Caco-2 (cell line): ENCODE measurements at regions of chr7 and their contacts with region 1.

Region 1: DNA sequence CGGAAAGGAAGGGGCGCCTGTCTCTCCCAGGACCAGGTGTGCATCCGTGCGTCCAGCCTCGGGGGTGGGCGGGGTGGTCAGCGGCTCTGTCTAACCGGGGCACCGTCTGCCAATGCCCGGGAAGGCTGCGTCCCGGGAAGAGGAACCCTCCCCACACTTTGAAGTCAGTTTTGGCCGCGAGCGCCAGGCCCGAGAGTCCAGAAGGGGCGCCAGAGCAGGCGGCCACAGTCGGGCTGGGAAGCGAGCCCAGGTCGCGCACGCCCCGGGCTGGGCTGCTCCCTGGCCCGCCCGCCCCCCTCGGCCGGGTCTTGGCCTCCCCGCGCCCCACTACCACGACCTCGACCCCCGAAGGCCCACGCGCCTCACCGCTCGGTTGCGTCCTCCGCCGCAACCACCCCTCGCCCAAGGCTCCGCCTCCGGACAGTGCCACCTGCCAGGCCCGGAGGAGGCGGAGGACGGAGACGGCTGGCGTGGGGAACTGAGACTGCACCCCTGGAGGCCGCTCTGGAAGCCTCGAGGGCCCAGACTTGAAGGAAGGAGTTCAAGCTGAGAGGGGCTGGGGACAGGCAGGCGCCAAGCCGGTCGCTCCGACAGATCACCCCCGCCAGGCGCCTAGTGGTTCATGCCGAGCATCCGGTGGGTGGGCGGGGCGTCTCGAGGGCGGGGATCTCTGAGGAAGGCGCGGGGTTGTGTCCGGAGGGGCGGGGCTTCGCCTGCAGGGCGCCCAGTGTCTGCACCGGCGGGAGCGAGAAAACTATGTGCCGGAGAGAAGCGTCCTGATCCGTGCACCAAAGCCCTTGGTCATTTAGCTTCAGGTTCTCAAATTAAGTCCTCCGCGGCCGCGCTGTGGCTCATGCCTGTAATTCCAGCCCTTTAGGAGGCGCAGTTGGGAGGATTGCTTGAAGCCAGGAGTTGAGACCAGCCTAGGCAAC is at the start of gene BRAT1:
- DNase-seq: peak; percentile 97 to 98
- H3K4me3 ChIP-seq: peak within 1 kb of the TSS; percentile 93
- H3K4me3 Mint-ChIP-seq: peak within 1 kb of the TSS; percentile 84
- H3K27ac Mint-ChIP-seq: peak within 1 kb of the TSS; percentile 89
- H3K4me1 ChIP-seq: peaks cover 7% of the 10 kb centered on the region
- H3K4me1 Mint-ChIP-seq: peaks cover 5% of the 10 kb centered on the region
- H3K27me3 ChIP-seq: no peaks in the 10 kb centered on the region
- H3K27me3 Mint-ChIP-seq: no peaks in the 10 kb centered on the region
- CTCF ChIP-seq: peak; percentile 45 to 69
- total RNA-seq, gene BRAT1: 33.2 and 33.5 TPM in 2 replicates

Region 2: DNA sequence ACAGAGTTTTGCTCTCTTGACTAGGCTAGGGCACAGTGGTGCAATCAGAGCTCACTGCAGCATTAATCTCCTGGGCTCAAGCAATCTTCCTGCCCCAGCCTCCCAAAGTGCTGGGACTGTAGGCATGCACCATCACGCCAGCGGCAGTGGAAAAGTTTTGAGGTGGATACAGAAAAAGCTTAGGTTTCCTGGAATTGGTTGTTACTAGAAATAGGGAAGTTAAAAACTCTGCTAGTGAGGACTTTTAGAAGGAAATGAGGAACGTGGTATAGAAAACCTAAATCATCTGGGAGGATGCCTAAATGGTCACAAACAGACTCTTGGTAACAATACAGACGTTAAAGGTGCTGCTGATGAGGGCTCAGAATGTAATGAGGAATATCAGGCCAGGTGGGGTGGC is 230.2 kb before region 1 on chr7:
- CTCF ChIA-PET with region 1: no interaction called
- POLR2A ChIA-PET with region 1: no interaction called
- intact Hi-C with region 1: no loop called
- DNase-seq: no peak
- H3K4me3 ChIP-seq: no peak overlapping the region
- H3K4me3 Mint-ChIP-seq: no peak overlapping the region
- H3K27ac Mint-ChIP-seq: no peak overlapping the region
- H3K4me1 ChIP-seq: no peaks in the 10 kb centered on the region
- H3K4me1 Mint-ChIP-seq: no peaks in the 10 kb centered on the region
- H3K27me3 ChIP-seq: no peaks in the 10 kb centered on the region
- H3K27me3 Mint-ChIP-seq: no peaks in the 10 kb centered on the region
- CTCF ChIP-seq: no peak

Region 3: DNA sequence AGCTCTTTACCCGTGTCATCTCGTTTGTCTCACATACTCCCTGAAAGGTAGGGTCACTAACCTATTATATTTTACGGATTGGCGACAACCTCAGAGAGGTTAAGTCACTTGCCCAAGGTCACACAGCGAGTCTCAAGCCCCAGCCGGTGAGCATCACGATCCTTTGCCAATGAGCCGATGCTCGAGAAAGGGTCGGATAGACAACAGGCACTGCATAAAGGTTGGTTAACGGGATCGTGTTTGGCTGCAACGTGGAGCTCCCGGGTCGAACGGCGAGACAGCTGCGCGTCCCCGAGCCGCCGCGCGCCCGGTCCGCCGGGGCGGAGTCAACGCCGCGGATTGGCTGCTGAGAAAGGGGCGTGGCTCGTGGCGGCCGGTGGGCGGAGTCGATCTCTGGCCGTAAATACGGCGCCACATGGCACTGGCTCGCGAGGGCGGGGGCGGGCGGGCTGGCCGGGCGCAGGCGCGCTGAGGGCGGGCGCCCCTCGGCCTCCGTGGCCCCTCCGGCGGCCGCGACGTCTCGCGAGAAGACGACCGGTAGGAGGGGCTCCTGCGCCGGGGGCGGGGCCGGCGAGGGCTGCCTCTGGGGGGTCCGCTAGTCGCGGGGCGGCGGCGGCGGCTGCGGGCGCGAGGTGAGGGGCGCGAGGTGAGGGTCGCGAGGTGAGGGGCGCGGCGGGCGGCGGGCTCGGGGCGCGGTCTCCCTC is 152.2 kb before region 1 on chr7 and contains the start of gene CHST12:
- CTCF ChIA-PET with region 1: no interaction called
- POLR2A ChIA-PET with region 1: no interaction called
- intact Hi-C with region 1: loop called (anchors 10 kb)
- DNase-seq: peak; percentile 95 to 97
- H3K4me3 ChIP-seq: peak within 1 kb of the TSS; percentile 79
- H3K4me3 Mint-ChIP-seq: peak within 1 kb of the TSS; percentile 76
- H3K27ac Mint-ChIP-seq: no peak within 1 kb of the TSS
- H3K4me1 ChIP-seq: peaks cover 6% of the 10 kb centered on the region; the same call in 1 of the 2 replicates
- H3K4me1 Mint-ChIP-seq: peaks cover 18% of the 10 kb centered on the region
- H3K27me3 ChIP-seq: no peaks in the 10 kb centered on the region
- H3K27me3 Mint-ChIP-seq: no peaks in the 10 kb centered on the region
- CTCF ChIP-seq: no peak
- total RNA-seq, gene CHST12: 26.0 and 28.0 TPM in 2 replicates

Region 4: DNA sequence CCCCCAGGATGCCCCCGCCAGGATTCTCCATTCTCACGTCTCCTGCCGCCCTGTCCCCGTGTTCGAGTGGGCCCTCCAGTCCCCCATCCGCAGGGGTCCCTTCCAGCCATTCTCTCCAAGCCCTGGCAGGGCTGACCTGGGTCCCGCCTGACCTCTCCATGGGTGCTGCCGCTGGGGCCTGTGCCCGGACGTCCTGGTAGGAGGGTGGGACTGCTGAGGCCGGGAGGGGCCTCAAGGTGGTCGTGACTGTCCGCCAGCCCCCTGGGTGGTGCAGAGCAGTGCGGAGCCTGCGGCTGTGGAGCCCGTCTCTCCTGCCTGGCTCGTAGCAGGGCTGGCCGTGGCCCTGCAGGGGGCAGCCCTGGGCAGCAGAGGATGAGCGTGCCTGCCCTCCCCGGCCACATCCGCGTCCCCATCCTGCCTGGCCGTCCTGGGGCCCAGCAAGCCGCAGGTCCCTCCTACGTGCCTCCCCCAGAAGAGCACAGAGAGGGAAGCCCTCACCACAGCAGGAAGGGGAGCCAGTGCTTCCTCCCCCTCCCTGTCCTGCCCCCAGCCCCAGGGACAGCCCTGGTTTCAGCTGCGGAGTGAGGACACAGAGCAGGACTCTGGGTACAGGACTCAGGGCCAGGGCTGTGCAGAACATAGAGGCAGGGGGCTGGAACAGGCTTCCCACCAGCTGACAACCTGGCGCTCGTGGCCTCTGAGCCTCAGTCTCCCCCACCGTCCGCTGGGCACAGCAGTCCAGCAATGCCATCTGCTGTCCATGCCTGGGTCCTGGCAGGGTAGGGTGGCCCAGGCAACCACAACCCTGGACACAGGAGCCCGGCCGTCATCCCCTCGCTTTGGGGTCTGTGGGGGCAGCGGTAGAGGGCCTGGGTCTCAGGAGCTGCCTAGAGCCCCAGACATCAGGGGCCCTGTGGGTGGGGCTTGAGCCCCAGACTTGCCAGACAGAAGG is 77.7 kb before region 1 on chr7:
- CTCF ChIA-PET with region 1: interaction called, 3 read pairs
- POLR2A ChIA-PET with region 1: no interaction called
- intact Hi-C with region 1: loop called (anchors 5 kb)
- DNase-seq: peak; percentile 51 to 75
- H3K4me3 ChIP-seq: no peak overlapping the region
- H3K4me3 Mint-ChIP-seq: no peak overlapping the region
- H3K27ac Mint-ChIP-seq: no peak overlapping the region
- H3K4me1 ChIP-seq: no peaks in the 10 kb centered on the region
- H3K4me1 Mint-ChIP-seq: no peaks in the 10 kb centered on the region
- H3K27me3 ChIP-seq: no peaks in the 10 kb centered on the region
- H3K27me3 Mint-ChIP-seq: no peaks in the 10 kb centered on the region
- CTCF ChIP-seq: peak; percentile 66 to 81

Region 5: DNA sequence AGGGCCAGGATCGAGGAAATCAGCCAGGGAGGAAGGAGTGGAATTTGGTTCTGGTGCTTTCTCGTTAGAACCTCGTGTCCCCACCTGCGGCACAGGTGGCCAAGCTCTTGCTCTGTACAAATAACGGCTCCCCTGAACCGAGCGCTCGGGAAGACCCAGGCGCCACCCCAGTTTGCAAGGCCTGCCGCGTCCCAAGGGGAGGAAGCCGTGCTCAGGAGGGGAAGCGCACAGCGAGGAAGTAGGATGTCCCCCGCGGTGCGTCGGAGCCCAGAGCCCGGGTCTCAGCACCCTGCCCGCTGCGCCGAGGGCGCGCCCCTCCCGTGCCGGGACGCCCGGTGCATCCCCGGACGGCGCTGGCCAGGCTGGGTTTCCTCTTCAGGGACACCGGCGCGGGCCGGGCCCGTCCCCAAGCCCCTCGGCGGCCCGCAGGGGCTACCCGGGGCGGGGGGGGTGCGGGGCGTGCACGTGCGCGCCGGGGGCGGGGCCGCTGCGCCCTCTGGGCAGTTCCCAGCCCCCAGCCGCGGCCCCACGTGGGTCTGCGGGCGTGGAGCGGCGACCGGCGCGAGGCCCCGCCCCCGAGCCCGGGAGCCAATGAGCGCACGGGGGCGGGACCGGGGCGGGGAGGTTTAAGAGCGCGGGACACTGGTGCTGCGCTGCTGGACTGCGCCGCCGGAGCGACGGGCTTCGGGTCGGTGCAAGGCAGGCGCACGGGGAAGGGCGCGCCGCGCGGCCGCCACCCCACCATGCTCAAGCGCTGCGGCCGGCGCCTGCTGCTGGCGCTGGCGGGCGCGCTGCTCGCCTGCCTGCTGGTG is 36.1 kb before region 1 on chr7 and contains the start of gene LFNG:
- CTCF ChIA-PET with region 1: interaction called, 6 read pairs
- POLR2A ChIA-PET with region 1: no interaction called
- intact Hi-C with region 1: loop called (anchors 2 kb)
- DNase-seq: peak; percentile 84 to 92
- H3K4me3 ChIP-seq: peak within 1 kb of the TSS; percentile 56
- H3K4me3 Mint-ChIP-seq: peak within 1 kb of the TSS; percentile 81
- H3K27ac Mint-ChIP-seq: no peak within 1 kb of the TSS
- H3K4me1 ChIP-seq: peaks cover 41% of the 10 kb centered on the region
- H3K4me1 Mint-ChIP-seq: peaks cover 13% of the 10 kb centered on the region
- H3K27me3 ChIP-seq: no peaks in the 10 kb centered on the region
- H3K27me3 Mint-ChIP-seq: no peaks in the 10 kb centered on the region
- CTCF ChIP-seq: no peak
- total RNA-seq, gene LFNG: 4.5 and 5.1 TPM in 2 replicates

Region 6: DNA sequence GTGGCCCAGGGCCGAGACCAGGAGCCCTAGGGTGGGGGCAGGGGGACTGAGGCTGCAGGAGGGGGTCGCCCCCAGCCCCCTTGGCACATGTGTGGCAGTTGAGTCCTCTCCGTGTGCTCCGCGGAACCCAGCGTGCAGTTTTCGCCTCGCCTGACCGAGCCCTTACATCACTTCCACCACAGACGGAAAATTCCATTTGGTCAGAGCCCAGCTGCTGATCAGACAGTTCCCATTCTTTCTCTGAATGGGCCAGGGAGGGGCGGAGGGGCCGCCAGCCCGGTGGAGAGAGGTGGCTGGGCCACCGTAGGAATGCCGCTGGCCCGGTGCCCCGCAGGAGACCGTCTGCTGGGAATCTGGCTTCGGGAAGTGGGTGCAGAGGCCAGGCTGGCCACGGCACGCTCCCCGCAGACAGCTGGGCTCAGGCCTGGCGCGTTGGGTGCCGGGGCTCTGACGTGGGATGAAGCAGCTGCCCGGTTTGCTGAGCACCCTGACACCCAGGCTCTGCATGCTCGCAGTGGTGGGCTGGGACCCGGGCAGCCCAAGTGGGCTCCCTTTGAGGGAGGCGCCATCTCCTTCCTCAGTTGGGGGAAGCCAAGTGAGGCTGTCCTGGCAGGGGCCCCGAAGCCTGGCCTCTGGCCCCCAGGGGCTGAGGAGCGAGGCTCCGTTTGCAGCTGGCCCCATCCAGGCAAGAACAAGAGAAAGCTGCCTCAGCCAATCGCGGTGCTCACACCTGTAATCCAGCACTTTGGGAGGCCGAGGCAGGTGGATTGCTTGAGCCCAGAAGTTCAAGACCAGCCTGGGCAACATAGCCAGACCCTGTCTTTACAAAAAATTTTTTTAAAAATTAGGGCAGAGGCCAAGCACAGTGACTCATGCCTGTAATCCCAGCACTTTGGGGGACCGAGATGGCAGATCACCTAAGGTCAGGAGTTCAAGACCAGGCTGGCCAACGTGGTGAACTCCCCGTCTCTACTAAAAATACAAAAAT is 86.3 kb after region 1 on chr7:
- CTCF ChIA-PET with region 1: no interaction called
- POLR2A ChIA-PET with region 1: no interaction called
- intact Hi-C with region 1: no loop called
- DNase-seq: peak in 1 of 2 experiments; percentile 42
- H3K4me3 ChIP-seq: no peak overlapping the region
- H3K4me3 Mint-ChIP-seq: no peak overlapping the region
- H3K27ac Mint-ChIP-seq: no peak overlapping the region
- H3K4me1 ChIP-seq: 0 out of 2 replicates have a peak, but pooled peaks cover 3% of the 10 kb centered on the region
- H3K4me1 Mint-ChIP-seq: no peaks in the 10 kb centered on the region
- H3K27me3 ChIP-seq: no peaks in the 10 kb centered on the region
- H3K27me3 Mint-ChIP-seq: no peaks in the 10 kb centered on the region
- CTCF ChIP-seq: no peak

Region 7: DNA sequence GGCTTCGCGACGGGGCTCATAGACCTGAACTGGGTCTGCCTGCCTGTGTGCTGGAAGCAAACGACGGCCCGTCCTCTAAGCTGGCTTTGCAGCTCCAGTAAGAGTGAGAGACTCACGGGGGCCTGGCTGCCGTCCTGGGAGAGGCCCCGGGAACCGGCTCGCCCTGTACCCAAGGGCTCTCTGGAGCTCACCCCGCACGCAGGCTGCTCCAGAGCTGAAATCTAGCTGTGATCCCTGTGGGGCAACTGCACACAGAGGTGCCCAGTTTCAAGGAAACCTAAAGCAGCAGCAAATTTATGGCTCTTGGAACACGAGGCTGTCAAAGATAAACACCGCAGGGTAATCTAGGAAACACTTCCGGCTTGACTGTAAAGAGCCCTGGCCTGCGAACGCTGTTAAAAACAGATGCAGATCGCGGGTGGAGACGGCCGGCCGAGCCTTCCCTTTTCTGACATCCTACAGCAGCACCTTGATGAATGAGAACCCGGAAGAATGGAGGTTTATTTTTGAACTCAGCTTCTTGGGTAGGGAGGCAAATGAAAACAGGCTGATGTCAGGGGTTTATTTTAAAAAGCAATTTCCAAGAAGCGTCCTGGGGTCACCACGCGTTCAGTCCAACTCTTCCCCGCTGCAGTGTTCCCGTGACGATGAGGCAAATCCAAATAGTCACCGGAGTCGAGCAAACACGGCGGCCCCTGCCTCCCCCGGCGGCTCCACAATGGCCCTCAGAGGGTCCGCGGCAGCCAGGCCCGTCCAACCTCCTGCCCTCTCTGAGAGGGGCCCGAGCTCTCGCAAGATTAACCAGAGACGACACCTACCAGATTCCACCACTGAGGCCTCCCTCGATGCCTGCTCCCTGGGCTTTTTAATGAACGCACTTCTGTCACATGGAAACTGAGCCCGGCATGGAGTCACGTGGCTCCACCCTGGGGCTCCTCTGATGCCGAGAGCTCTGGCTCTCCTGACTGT is 162.2 kb after region 1 on chr7:
- CTCF ChIA-PET with region 1: no interaction called
- POLR2A ChIA-PET with region 1: no interaction called
- intact Hi-C with region 1: no loop called
- DNase-seq: peak in 1 of 2 experiments; percentile 30
- H3K4me3 ChIP-seq: no peak overlapping the region
- H3K4me3 Mint-ChIP-seq: no peak overlapping the region
- H3K27ac Mint-ChIP-seq: no peak overlapping the region
- H3K4me1 ChIP-seq: no peaks in the 10 kb centered on the region
- H3K4me1 Mint-ChIP-seq: peaks cover 8% of the 10 kb centered on the region
- H3K27me3 ChIP-seq: no peaks in the 10 kb centered on the region
- H3K27me3 Mint-ChIP-seq: no peaks in the 10 kb centered on the region
- CTCF ChIP-seq: no peak

Region 8: GRCh38 chr7:3312583-3312982 is 757.2 kb after region 1 on chr7:
- CTCF ChIA-PET with region 1: no interaction called
- POLR2A ChIA-PET with region 1: no interaction called
- intact Hi-C with region 1: no loop called
- DNase-seq: no peak
- H3K4me3 ChIP-seq: no peak overlapping the region
- H3K4me3 Mint-ChIP-seq: no peak overlapping the region
- H3K27ac Mint-ChIP-seq: no peak overlapping the region
- H3K4me1 ChIP-seq: no peaks in the 10 kb centered on the region
- H3K4me1 Mint-ChIP-seq: no peaks in the 10 kb centered on the region
- H3K27me3 ChIP-seq: no peaks in the 10 kb centered on the region; the same call in 1 of the 2 replicates
- H3K27me3 Mint-ChIP-seq: peaks cover 3% of the 10 kb centered on the region
- CTCF ChIP-seq: no peak